Endothelial cell of umbilical vein (primary cell): ENCODE measurements at regions of chr20 and their contacts with region 1.

Region 1: GRCh38 chr20:17898548-17898994 is 70.0 kb downstream of the SNX5 start:
- DNase-seq: peak; percentile 70
- H3K4me3 ChIP-seq: no peak overlapping the region
- H3K27ac ChIP-seq: no peak overlapping the region
- H3K4me1 ChIP-seq: peaks cover 25% of the 10 kb centered on the region
- H3K27me3 ChIP-seq: peaks cover 4 to 5% of the 10 kb centered on the region in 2 experiments
- CTCF ChIP-seq: peak; percentile 81 to 86
- POLR2A ChIP-seq: no peak

Region 2: DNA sequence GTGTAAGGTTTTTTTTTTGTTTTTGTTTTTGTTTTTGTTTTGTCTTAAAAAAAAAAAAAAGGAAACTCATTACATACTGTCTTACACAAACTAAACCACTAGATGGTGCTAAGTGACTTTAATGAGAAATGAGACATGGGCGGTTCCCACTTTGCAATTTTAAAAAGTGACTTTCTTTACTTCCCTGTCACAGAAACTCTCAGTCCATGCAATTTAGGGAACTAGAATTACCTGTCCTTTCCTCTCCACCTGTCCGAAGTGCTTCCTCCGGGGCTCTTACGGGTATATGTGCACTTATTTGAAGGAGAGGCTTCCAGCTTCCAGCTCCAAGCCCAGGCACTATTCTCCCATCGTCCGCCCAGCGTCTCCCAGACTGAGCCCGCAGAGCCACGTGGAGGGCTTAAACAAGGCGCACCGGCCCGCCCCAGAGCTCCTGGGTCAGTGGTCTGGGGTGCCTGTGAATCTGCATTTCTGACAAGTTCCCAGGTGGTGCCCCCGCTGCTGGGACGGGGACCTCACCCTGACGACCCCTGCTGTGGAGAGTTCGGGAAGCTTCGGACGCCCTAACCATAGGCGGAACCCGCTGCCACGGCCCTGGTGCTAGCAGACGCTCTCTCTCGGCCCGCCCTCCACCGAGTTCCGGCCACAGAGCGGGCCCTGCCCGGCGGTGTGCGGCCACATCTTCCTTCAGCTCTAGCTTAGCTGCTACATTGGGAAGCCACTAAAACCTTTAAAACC is 393.5 kb before region 1 on chr20:
- CTCF ChIA-PET with region 1: interaction called, 11 read pairs
- POLR2A ChIA-PET with region 1: no interaction called
- dilution Hi-C with region 1: no loop called
- intact Hi-C with region 1: loop called (anchors 1 kb)
- DNase-seq: peak; percentile 72
- H3K4me3 ChIP-seq: peak overlapping the region; percentile 31 to 74 (median 58)
- H3K27ac ChIP-seq: peak overlapping the region; percentile 9
- H3K4me1 ChIP-seq: peaks cover 13% of the 10 kb centered on the region
- H3K27me3 ChIP-seq: no peaks in the 10 kb centered on the region
- CTCF ChIP-seq: peak; percentile 39 to 41
- POLR2A ChIP-seq: peak; percentile 61

Region 3: DNA sequence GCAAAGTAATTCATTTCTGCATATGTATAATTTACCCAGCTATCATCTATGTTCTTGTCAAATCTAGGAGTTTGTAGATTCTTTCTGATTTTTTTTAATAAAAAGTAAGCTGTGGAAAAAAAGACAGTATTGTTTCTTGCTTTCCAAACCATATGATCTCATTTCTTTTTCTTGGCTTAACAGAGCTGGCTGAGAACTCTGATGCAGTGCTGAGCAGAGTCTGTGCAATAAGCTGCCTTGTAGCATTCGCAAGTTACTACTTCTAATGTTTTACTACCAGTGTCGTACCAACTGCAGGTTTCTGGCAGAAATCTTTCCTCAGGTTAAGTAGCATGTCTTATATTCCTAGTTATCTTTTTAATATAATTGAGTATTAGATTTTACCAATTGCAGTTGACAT is 232.1 kb before region 1 on chr20:
- CTCF ChIA-PET with region 1: interaction called, 10 read pairs
- POLR2A ChIA-PET with region 1: no interaction called
- dilution Hi-C with region 1: no loop called
- intact Hi-C with region 1: no loop called
- DNase-seq: peak; percentile 76
- H3K4me3 ChIP-seq: no peak overlapping the region
- H3K27ac ChIP-seq: peak overlapping the region; percentile 89
- H3K4me1 ChIP-seq: peaks cover 27% of the 10 kb centered on the region
- H3K27me3 ChIP-seq: no peaks in the 10 kb centered on the region
- CTCF ChIP-seq: no peak
- POLR2A ChIP-seq: no peak

Region 4: DNA sequence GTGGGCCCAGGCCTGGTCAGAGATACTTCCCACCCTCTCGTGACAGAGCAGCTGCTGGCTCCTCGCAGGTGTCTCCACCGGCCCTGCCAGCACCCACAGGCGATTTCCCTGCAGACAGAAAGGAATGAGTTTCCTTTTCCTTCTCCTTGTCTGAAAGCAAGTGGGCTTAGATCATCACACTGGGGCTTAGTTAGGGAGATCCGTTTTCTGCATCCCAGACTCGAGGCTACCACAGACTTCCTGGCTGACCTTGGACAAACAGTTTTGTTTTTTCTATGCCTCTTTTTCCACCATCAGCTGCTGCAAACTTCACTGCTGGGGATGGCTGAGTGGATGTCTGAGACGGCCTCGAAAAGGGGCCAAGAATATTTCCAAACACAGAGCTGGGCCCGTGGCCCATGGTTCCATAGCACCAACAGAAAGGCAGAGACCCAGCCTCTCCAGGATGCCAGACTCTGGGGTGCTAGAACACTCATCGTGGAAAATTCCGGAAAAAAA is 112.3 kb before region 1 on chr20:
- CTCF ChIA-PET with region 1: interaction called, 3 read pairs
- POLR2A ChIA-PET with region 1: no interaction called
- dilution Hi-C with region 1: no loop called
- intact Hi-C with region 1: loop called (anchors 1 kb)
- DNase-seq: peak; percentile 91
- H3K4me3 ChIP-seq: no peak overlapping the region
- H3K27ac ChIP-seq: peak overlapping the region; percentile 62
- H3K4me1 ChIP-seq: peaks cover 6% of the 10 kb centered on the region
- H3K27me3 ChIP-seq: peaks cover 0 to 4% of the 10 kb centered on the region in 2 experiments
- CTCF ChIP-seq: no peak
- POLR2A ChIP-seq: no peak

Region 5: DNA sequence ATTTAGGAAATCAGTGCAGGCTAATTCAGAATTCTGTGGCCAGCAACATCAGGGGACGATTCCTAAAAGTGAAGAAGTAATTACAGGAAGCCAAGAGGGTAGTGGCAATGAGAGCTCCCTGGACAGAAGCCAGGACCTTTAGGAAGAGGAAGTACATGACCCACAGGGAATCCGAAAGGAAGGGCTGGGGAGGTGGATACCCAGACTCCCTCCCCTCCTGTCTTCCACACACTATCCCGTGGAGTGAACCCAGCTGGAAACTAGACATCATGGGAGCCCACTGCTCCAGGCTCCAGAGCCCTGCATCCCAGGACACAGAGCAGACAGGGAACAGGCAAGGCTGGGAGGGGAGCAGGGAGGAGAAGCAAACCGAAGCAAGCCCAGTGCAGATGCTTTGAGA is 13.0 kb before region 1 on chr20:
- CTCF ChIA-PET with region 1: interaction called, 16 read pairs
- POLR2A ChIA-PET with region 1: no interaction called
- dilution Hi-C with region 1: no loop called
- intact Hi-C with region 1: no loop called
- DNase-seq: no peak
- H3K4me3 ChIP-seq: no peak overlapping the region
- H3K27ac ChIP-seq: no peak overlapping the region
- H3K4me1 ChIP-seq: peaks cover 5% of the 10 kb centered on the region
- H3K27me3 ChIP-seq: no peaks in the 10 kb centered on the region
- CTCF ChIP-seq: no peak
- POLR2A ChIP-seq: no peak

Region 6: GRCh38 chr20:17995967-17996819 is 97.6 kb after region 1 on chr20:
- CTCF ChIA-PET with region 1: no interaction called
- POLR2A ChIA-PET with region 1: interaction called, 8 read pairs
- dilution Hi-C with region 1: no loop called
- intact Hi-C with region 1: loop called (anchors 1 kb)
- DNase-seq: peak; percentile 70
- H3K4me3 ChIP-seq: no peak overlapping the region
- H3K27ac ChIP-seq: no peak overlapping the region
- H3K4me1 ChIP-seq: peaks cover 16% of the 10 kb centered on the region
- H3K27me3 ChIP-seq: peaks cover 0 to 4% of the 10 kb centered on the region in 2 experiments
- CTCF ChIP-seq: peak; percentile 85 to 86
- POLR2A ChIP-seq: no peak